Right ventricle myocardium inferior (tissue), 1 donor: ENCODE measurements at regions of chr6 and their contacts with region 1.

Region 1: DNA sequence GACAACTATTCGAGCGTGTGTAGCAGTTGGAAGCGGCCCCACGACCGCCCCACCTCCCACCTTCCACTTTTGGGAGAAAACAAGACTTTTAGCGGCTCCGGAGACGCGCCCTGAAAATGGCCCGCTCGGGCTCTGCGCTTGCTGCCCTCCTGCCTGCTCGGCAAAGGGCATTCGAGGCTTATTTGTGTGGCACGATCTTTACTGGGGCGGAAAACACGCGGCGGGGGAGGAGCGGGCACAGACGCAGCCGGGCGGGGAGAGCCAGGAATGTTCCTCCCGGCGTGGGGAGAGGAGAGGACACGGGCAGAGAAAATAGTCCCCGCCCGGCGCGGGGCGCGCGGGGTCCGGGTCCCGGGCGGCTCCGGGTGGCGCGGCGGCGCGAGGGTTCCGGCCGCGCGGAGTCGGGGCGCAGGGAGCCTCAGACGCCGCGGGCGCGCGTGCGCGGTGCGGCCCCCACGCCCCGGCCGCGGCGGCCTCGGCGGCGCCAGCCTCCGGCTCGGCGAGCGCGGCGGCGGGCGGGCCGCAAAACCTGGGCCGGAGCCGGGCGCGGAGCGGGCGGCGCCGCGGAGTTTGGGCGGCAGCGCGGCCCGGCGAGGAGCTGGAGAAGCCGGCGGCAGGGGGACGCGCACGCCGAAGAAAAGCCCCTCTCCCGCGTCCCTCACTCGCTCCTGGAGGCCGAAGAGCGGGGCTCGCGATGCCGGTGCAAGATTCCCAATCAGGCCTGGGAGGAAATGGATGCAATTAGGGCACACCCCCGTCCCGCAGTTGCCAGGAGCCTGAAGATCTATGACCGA is 90.0 kb upstream of the ARID1B start:
- DNase-seq: peak; percentile 94
- ATAC-seq: peak; percentile 98

Region 2: DNA sequence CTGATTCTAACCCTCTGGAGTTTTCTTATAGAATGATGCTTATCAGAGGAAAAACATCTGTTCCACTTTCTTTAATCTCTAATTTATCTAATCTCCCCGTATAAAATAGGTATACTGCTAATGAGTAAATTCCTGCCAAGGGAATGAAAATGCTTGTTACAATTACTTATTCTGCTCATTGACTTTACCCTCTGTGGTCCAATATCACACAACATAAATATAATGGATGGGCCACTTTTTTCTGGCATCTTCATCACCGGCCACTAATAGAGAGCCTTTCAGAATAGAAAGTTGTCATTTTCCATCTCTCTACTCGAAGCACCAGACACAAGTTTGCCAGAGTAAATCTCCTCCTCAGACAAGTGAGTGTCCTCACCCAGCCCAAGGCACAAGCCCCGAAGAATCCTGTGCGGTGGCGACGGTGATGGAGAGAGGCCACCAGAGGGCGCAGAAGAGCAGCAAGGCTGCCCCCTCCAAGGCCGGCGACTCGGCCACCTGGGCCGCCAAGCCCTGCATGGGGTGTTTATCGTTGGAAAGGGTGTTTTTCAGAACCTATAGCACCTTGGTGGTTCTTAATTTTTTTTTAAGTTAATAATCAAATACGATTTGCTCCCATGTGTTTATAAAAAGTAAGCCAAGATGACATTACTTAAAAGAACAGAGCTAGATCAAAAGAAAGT is 122.9 kb before region 1 on chr6:
- intact Hi-C with region 1: loop called (anchors 2 kb)
- DNase-seq: peak; percentile 90
- ATAC-seq: peak; percentile 94

Region 3: GRCh38 chr6:156719720-156720563 is 32.8 kb after region 1 on chr6:
- intact Hi-C with region 1: loop called (anchors 1 kb)
- DNase-seq: peak; percentile 98
- ATAC-seq: peak; percentile 99

Region 4: DNA sequence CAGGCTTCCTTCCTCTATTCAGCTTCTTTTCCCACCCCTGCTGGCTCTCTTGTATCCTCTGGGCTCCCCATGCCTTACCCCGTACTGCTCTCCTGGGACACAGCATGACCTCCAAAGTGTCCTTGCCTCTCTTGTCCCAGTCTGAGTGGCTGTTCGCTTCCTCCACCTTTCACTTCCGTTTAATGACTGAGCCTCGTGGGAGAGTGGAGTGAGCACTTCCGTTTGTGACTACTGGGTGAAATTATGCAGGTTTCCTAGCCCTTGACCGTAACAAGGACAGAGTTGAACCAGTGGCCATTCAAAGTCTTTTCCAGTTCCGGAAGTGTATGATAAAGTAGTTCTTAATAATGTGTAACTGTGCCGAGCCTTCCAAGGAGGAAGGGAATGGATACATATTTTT is 199.2 kb after region 1 on chr6:
- intact Hi-C with region 1: loop called (anchors 5 kb)
- DNase-seq: no peak
- ATAC-seq: peak; percentile 28

Region 5: DNA sequence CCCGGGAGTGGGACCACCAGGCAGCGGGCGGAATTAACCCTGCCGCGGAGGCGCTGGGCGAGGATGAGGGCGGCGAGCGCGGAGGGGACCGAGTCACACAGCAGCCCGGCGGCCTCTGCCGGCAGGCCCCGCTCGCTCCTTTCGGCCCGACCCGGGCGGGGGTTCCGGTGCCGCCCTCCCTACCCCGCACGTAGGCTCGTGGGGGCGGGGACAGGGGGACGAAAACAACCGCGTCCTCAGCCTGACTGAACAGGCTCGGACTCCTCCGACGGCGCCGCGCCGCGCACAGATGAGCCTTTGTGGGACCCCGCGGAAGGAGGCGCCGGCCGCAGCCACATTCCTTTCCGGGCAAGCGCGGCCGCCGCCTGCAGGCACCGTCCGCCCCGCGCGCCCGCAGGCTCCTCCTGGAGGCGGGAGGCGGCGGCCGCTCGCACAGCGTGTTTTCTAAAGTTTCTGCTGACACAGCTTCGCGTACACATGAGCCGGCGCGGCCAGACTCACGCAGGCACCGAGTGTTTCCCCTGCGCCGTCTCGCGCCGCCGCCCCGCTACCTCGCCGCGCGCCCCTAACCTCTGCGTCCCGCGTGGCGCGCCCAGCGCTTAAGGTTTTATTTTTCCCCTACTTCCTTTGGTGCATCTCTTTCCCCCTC is 334.3 kb after region 1 on chr6:
- intact Hi-C with region 1: loop called (anchors 2 kb)
- DNase-seq: peak; percentile 96
- ATAC-seq: peak; percentile 96